Caco-2 (cell line): ENCODE measurements at regions of chr2 and their contacts with region 1.

Region 1: DNA sequence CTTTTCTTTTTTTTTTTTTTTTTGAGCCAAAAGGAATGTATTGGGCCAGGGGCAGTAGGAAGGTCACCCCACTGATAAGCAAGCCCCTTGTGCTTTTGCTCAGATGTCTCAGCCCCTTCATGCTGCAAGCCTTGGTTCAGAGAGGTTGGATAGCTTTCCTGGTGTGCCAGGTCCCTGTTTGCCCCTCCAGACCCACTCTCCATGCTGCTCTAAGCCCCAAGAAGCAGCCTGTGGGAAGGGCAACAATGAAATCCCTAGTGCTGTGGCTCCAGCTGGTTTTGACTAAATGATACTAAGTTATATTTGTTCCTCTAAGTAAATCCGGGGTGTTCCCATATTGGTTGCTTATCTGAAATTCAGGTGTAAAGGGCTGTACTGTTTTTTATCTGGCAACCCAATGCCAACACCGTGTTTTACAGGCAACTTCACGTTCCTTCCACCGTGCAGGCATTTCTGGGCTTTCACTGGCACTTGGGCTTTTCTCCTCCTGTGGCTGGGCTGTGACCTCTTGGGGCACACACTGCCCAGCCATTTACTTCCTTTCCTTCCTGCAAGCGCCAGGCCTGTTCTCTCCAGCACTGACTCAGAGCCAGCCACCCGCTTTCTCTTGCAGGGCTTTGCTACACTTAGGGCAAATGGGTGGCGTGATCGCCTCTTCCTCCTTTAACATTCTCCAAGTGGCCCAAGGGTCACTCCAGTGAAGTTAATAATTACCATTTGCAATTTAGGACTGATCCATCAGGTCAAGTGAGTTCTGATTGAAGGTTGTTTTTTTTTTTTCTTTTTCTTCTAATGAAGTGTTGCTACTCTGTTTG is 21.6 kb downstream of the MERTK start:
- DNase-seq: peak; percentile 85 to 92
- H3K4me3 ChIP-seq: peak overlapping the region; percentile 18; the same call in 1 of the 2 replicates
- H3K4me3 Mint-ChIP-seq: peak overlapping the region; percentile 62
- H3K27ac Mint-ChIP-seq: peak overlapping the region; percentile 82
- H3K4me1 ChIP-seq: peaks cover 53% of the 10 kb centered on the region
- H3K4me1 Mint-ChIP-seq: peaks cover 49% of the 10 kb centered on the region
- H3K27me3 ChIP-seq: no peaks in the 10 kb centered on the region
- H3K27me3 Mint-ChIP-seq: no peaks in the 10 kb centered on the region
- CTCF ChIP-seq: no peak

Region 2: GRCh38 chr2:111909079-111909478 is 10.9 kb before region 1 on chr2:
- CTCF ChIA-PET with region 1: no interaction called
- POLR2A ChIA-PET with region 1: no interaction called
- intact Hi-C with region 1: loop called (anchors 1 kb)
- DNase-seq: no peak
- H3K4me3 ChIP-seq: no peak overlapping the region
- H3K4me3 Mint-ChIP-seq: peak overlapping the region; percentile 15
- H3K27ac Mint-ChIP-seq: peak overlapping the region; percentile 88
- H3K4me1 ChIP-seq: peaks cover 72% of the 10 kb centered on the region
- H3K4me1 Mint-ChIP-seq: peaks cover 48% of the 10 kb centered on the region
- H3K27me3 ChIP-seq: no peaks in the 10 kb centered on the region
- H3K27me3 Mint-ChIP-seq: no peaks in the 10 kb centered on the region
- CTCF ChIP-seq: no peak

Region 3: GRCh38 chr2:111958901-111959300 is 38.9 kb after region 1 on chr2:
- CTCF ChIA-PET with region 1: no interaction called
- POLR2A ChIA-PET with region 1: no interaction called
- intact Hi-C with region 1: no loop called
- DNase-seq: no peak
- H3K4me3 ChIP-seq: no peak overlapping the region
- H3K4me3 Mint-ChIP-seq: no peak overlapping the region
- H3K27ac Mint-ChIP-seq: no peak overlapping the region
- H3K4me1 ChIP-seq: peaks cover 11% of the 10 kb centered on the region
- H3K4me1 Mint-ChIP-seq: peaks cover 18% of the 10 kb centered on the region
- H3K27me3 ChIP-seq: no peaks in the 10 kb centered on the region
- H3K27me3 Mint-ChIP-seq: no peaks in the 10 kb centered on the region
- CTCF ChIP-seq: no peak

Region 4: DNA sequence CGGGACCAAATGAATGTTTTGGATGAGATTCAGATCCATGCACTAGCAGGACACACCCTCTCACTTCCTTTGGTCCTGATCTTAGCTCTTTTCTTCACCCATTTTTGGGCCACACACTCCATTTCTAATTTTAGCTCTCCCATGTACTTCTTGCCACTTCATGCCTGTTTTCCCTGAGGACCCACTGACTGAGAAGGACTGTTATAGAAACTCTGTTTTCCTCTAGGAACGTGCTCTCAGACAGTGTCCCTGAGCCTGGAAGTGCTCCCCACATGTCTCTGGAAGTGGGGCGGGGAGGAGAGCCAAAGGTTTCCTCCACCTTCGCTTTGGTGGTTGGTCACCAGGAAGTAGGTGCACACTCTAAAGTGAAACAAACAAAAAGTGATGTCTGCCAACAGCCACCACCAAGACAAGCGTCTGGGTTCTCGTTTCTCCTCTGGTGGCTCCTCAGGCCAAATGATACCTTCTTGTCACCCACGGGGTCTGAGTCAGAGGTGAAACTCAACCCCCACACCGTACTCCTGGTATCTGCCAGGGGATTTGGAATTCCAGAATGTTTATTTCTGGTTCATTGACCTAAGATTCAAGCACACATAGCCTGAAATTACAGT is 53.1 kb after region 1 on chr2:
- CTCF ChIA-PET with region 1: no interaction called
- POLR2A ChIA-PET with region 1: no interaction called
- intact Hi-C with region 1: no loop called
- DNase-seq: no peak
- H3K4me3 ChIP-seq: no peak overlapping the region
- H3K4me3 Mint-ChIP-seq: no peak overlapping the region
- H3K27ac Mint-ChIP-seq: peak overlapping the region; percentile 77
- H3K4me1 ChIP-seq: peaks cover 29% of the 10 kb centered on the region
- H3K4me1 Mint-ChIP-seq: peaks cover 36% of the 10 kb centered on the region
- H3K27me3 ChIP-seq: no peaks in the 10 kb centered on the region
- H3K27me3 Mint-ChIP-seq: no peaks in the 10 kb centered on the region
- CTCF ChIP-seq: no peak